ENCODE measurements at regions of chr6 and their contacts with region 1.

Region 1: DNA sequence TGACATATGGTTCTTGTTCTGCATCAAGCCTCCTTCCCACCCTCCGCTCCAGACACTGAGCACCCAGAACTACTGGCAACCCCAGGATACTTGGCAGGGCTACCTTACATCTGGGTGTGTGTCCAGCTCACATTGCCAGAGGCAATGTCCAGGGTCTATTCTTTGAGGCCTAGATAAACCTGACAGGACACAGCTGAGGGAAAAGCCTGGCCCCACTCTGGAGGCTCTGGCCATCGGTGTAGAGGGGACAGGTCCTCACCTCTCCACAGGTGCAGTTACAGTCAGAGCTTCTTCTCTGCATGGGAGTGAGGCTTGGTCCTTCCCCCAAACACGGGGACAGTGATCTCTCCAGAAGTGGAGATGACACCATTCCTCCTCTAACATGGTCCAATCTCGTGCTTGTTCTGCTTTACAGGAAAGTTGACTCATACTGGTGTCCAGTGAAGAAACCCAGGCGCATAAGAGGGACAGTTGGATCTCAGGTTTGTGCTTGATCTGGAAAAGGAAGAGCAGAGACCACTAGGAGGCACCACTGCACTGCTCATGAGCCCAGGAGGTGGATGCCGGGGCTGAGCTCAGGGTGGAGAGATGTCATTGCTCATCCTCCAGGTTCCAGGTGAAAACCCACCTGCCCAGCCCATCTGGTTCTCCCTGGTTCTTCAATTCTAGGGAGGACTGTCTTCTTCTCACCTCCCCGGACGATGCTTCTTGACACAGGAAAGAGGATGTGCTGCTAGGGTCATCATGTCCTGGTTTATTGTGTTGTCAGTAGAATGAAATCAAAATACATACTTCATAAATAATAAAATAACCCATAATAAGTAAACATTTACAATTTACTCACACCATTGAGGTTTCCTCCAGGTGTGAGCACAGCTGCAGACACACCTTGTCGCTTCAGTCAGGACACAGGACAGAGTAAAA is 14.7 kb downstream of the HLA-F start:
- DNase-seq: peak; percentile 79
- ATAC-seq: peak; percentile 90
- H3K4me3 Mint-ChIP-seq: no peak overlapping the region
- H3K27ac Mint-ChIP-seq: no peak overlapping the region
- H3K4me1 Mint-ChIP-seq: peaks cover 13% of the 10 kb centered on the region
- H3K27me3 Mint-ChIP-seq: no peaks in the 10 kb centered on the region

Region 2: DNA sequence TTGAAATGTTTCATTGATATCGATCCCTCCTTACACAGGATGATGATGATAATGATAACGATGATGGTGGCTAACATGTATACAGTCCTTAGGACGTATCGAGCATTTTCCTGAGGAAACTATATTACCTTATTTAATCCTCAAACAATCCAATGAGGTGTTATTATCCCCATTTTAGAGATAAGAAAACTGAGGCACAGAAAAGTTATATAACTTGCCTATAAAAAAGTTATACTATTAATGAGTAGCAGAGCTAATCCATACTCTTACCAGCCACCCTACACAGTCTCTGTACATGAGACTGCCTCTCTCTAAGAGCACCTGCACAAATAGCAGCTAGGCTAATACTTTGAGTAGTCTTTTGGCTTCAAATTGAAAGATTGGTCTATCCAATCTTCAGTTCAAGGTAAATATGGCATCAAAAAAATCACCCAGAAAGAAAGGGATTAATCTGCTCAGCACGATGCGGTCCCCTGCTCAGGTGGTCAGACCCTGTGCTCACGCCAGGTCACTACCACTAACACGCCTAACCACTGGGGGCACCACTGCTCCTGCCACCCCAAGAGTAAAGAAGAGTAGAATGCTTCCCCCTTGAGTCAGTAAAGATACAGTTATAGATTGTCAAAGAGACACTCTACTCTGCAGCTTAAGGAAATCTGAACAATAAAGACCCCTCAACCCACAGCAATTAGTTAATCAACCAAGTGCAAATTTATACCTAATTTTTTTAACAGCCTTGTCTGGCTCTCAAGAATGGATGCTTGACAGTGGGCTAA is 120.0 kb before region 1 on chr6:
- CTCF ChIA-PET with region 1: no interaction called
- DNase-seq: no peak
- ATAC-seq: no peak
- H3K4me3 Mint-ChIP-seq: no peak overlapping the region
- H3K27ac Mint-ChIP-seq: no peak overlapping the region
- H3K4me1 Mint-ChIP-seq: no peaks in the 10 kb centered on the region
- H3K27me3 Mint-ChIP-seq: no peaks in the 10 kb centered on the region

Region 3: DNA sequence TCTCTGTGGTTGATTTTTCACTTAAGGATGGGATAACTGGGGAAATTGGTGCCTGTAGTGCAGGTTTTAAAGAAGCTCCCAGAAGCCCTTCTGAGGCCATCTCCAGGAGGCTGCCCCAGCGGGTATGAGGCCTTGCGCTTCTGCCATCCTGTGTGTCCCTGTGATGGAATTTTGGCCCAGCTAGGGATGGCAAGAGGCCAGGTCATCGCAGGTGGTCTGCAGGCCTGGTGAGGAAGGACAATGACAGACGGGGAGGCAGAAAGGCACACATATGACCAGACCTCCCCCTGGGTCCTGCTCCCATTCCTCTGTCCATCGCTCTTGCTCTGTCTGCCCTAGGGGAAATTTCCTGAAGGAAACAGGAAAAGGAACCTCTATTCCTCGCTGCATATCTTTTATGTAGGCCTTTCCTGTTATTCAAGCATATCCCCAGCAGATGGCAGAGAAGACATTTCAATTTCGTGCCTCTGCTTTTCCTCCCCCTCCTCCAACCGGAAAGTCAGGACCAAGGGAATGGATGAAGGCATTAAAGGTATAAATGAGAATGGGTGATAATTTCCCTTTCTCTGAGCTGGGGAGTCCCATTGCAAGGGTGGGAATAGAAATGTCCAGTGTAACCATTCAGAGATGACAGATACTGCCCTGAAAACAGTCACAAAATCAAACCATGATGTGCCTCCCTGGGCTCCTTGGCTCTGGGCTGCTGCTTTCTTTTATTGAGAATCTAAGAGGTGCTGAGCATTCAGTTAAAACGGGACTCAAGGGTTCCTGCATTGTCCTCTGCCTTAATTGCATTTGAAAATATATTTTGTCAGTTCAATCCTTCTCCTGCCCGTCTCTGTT is 32.4 kb before region 1 on chr6:
- CTCF ChIA-PET with region 1: interaction called, 18 read pairs
- DNase-seq: no peak
- ATAC-seq: no peak
- H3K4me3 Mint-ChIP-seq: no peak overlapping the region
- H3K27ac Mint-ChIP-seq: no peak overlapping the region
- H3K4me1 Mint-ChIP-seq: peaks cover 44% of the 10 kb centered on the region
- H3K27me3 Mint-ChIP-seq: peaks cover 31% of the 10 kb centered on the region

Region 4: GRCh38 chr6:29724937-29725869 is 12.8 kb before region 1 on chr6:
- CTCF ChIA-PET with region 1: interaction called, 36 read pairs
- DNase-seq: no peak
- ATAC-seq: no peak
- H3K4me3 Mint-ChIP-seq: peak overlapping the region; percentile 98
- H3K27ac Mint-ChIP-seq: peak overlapping the region; percentile 93
- H3K4me1 Mint-ChIP-seq: peaks cover 55% of the 10 kb centered on the region
- H3K27me3 Mint-ChIP-seq: no peaks in the 10 kb centered on the region

Region 5: DNA sequence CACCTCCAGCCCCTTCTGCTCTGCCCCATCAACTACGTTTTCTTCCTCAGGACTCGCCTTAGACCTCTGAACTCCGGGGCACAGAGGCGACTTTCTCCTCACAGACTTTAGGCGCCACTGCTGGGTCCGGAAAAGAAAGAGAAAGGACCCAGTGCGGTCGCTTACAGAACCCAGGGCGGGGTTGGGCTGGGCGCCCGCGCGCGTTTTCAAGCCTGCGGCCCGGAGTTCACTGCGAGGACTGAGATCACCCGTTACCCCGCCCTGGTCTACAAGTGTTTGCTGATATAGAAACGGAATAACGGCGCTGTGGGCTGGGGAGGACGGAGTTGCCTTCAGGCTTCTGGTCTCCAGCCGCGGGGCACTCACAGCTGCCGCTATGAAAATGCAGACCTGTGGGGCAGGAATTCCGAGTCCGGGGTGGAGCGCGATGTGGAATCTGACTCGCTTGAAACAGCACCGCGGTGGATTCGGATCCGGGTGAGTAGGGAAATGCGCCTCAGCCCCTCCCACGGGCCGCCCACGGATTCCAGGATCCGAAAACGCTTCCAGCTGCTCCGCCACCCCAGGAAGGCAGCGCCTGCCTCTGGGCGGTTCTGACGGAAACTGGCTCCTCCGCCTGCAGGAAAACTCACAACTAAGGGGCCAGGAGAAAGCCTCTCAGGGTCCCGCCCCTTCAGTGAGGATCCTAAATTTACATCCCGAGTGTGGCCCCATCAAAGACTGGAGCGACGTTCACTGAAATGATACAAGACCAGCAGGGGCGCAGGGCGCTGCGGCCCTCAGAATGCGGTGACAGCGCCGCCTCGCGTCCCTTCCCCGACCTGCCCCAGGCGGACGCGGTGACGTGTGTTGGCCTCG is 14.7 kb after region 1 on chr6:
- CTCF ChIA-PET with region 1: interaction called, 65 read pairs
- DNase-seq: peak; percentile 91
- ATAC-seq: peak; percentile 70
- H3K4me3 Mint-ChIP-seq: peak overlapping the region; percentile 85
- H3K27ac Mint-ChIP-seq: peak overlapping the region; percentile 94
- H3K4me1 Mint-ChIP-seq: peaks cover 48% of the 10 kb centered on the region
- H3K27me3 Mint-ChIP-seq: no peaks in the 10 kb centered on the region

Region 6: GRCh38 chr6:29834564-29835436 is 96.8 kb after region 1 on chr6:
- CTCF ChIA-PET with region 1: interaction called, 89 read pairs
- DNase-seq: peak; percentile 64
- ATAC-seq: peak; percentile 68
- H3K4me3 Mint-ChIP-seq: no peak overlapping the region
- H3K27ac Mint-ChIP-seq: no peak overlapping the region
- H3K4me1 Mint-ChIP-seq: peaks cover 11% of the 10 kb centered on the region
- H3K27me3 Mint-ChIP-seq: peaks cover 77% of the 10 kb centered on the region

Region 7: DNA sequence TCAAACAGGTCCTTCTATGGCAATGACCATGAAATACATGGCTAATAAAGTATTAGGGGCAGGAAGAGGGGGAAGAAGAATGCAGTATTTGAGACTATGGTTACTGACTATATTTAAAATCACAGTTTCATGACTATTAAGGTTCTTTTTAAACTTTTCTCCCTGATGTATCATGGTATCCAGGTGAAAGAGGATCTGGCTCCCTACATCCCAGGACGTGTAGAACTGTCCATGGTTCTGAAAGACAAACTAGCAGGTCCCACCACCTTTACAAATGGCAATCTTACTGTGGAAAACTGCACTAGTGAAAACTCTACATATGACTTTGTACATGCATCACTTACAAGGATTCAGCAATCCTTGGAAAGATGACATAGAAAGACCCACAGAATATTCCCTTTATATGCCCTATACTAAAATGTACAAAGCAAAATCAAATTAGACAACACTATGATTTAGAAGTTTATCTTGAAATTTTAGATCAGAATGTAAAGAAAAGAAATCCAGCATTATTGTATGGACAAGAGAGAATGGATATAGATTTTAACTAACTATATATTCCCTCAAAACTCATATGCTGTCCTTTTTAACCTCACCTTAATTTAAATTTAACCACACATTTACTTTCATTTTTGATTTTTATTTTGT is 640.4 kb after region 1 on chr6:
- CTCF ChIA-PET with region 1: no interaction called
- DNase-seq: no peak
- ATAC-seq: no peak
- H3K4me3 Mint-ChIP-seq: no peak overlapping the region
- H3K27ac Mint-ChIP-seq: no peak overlapping the region
- H3K4me1 Mint-ChIP-seq: no peaks in the 10 kb centered on the region
- H3K27me3 Mint-ChIP-seq: peaks cover 67% of the 10 kb centered on the region

Measured in activated CD8-positive, alpha-beta memory T cell treated with anti-CD3 and anti-CD28 coated beads, Interleukin-2, amount 10 ng/mL, durations not matched to agents 7 days and 5 days (primary cell).